ENCODE measurements at regions of chr16 and their contacts with region 1.

Region 1: GRCh38 chr16:30829130-30830071 is 42.4 kb upstream of the ZNF629 start:
- DNase-seq: no peak

Region 2: GRCh38 chr16:30761928-30762810 is 67.2 kb before region 1 on chr16 and contains the starts of genes CFAP119 and RNF40:
- intact Hi-C with region 1: loop called (anchors 10 kb)
- DNase-seq: peak; percentile 92 to 99 (median 96)

Region 3: GRCh38 chr16:30844671-30845449 is 15.5 kb after region 1 on chr16:
- intact Hi-C with region 1: no loop called
- DNase-seq: peak in 5 of 10 donors; percentile 38 to 67 (median 51)

Measured in posterior cingulate gyrus (tissue), 11 donors.